Activated T-helper 1 cell treated with anti-CD3 and anti-CD28 coated beads, Interleukin-12 subunit alpha, Interleukin-12 subunit beta, Interleukin-2, Interleukin-4 antibody, amounts not matched to agents 30 ng/mL and 10 ng/mL and 1 ng/mL, durations not matched to agents 14 hours and 24 hours and 36 hours (primary cell): ENCODE measurements at regions of chr16 and their contacts with region 1.

Region 1: DNA sequence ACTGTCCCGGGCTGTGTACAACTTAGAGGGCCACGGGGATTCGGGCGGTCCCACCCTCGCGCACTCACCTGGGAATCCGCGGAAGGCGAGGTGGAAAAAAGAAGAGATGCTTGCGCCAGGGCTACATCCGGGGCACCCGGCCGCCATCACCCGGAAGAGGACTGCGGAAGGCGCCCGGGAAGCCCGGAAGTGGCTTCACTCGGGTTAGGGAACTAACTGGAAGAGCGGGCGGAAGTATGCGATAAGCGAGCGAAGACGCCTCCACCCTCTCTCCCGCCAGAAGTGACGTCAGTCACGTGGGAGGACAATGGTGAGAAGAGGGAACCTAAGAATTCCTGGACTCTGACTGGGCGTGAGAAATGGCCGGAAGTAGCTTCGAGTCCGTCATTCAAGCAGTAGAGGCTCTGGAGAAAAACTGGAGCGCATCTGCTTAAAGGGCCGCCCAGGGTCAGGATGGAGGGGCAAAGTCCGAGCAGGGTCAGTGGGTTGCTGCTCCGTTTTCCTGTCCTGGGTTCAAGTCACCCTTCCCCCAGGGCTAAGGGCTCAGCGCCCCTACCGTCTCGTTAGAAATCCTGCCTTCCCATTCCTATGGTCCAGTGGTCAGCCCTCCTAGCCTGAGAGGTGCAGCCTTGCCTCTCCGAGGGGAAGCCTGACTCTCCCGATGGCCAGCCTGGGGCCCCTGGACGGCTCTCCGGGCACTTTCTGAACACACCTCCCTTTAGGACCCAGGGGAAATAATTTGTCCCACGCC is at the start of gene CD2BP2:
- DNase-seq: peak; percentile 87
- H3K4me3 Mint-ChIP-seq: peak within 1 kb of the TSS; percentile 91
- H3K27ac Mint-ChIP-seq: peak within 1 kb of the TSS; percentile 88
- H3K4me1 Mint-ChIP-seq: peaks cover 46% of the 10 kb centered on the region
- H3K27me3 Mint-ChIP-seq: no peaks in the 10 kb centered on the region
- total RNA-seq, gene CD2BP2: 100 and 104 TPM in 2 replicates

Region 2: DNA sequence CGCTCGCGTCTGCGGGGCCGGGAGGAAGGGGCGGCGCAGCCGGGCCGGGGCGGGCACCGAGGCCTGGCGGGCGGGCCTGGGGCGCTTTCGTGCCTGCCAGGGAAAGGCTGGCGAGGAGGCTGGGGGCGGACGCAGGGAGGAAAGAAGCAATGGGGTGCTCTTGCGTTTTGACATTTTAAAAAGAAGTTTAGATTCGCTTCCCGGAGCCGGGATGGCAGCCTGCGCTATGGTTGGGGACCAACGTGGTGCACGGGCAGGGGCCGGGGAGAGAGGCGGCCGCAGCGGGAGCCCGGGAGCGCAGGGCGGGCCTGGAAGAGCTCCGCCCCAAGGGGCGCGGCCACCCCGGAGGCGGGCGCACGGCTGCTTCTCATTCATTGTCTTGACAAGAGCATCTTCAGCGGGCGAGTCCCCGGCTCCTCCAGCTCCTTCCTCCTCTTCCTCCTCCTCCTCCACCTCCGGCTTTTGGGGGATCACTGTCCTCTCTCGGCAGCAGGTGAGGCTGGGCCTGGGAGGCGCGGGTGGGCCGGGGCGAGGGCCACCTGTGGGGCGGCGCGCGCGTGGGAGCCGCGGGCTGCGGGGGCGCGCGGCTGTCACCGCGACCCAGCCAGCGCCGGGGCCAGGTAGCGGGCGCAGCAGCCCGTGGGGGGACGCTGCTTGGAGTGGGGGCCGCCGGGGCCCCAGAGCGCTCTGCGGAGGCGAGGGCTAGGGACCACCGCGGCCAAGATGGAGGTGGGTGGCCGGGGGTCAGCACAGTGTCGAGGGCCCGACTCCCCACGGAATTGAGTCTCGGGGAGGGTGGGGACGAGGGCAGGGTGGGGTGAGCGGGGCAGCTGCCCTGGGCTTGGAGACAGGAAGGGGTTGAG is 171.9 kb before region 1 on chr16 and contains the start of gene CORO1A:
- intact Hi-C with region 1: no loop called
- DNase-seq: peak; percentile 82
- H3K4me3 Mint-ChIP-seq: peak within 1 kb of the TSS; percentile 100
- H3K27ac Mint-ChIP-seq: peak within 1 kb of the TSS; percentile 99
- H3K4me1 Mint-ChIP-seq: peaks cover 27% of the 10 kb centered on the region
- H3K27me3 Mint-ChIP-seq: no peaks in the 10 kb centered on the region
- total RNA-seq, gene CORO1A: 816 and 819 TPM in 2 replicates

Region 3: GRCh38 chr16:30370444-30371247 is 15.3 kb after region 1 on chr16 and contains the start of gene TBC1D10B:
- intact Hi-C with region 1: loop called (anchors 1 kb)
- DNase-seq: peak; percentile 99
- H3K4me3 Mint-ChIP-seq: peak within 1 kb of the TSS; percentile 94
- H3K27ac Mint-ChIP-seq: peak within 1 kb of the TSS; percentile 89
- H3K4me1 Mint-ChIP-seq: peaks cover 41% of the 10 kb centered on the region
- H3K27me3 Mint-ChIP-seq: no peaks in the 10 kb centered on the region
- total RNA-seq, gene TBC1D10B: 68.9 and 73.6 TPM in 2 replicates

Region 4: DNA sequence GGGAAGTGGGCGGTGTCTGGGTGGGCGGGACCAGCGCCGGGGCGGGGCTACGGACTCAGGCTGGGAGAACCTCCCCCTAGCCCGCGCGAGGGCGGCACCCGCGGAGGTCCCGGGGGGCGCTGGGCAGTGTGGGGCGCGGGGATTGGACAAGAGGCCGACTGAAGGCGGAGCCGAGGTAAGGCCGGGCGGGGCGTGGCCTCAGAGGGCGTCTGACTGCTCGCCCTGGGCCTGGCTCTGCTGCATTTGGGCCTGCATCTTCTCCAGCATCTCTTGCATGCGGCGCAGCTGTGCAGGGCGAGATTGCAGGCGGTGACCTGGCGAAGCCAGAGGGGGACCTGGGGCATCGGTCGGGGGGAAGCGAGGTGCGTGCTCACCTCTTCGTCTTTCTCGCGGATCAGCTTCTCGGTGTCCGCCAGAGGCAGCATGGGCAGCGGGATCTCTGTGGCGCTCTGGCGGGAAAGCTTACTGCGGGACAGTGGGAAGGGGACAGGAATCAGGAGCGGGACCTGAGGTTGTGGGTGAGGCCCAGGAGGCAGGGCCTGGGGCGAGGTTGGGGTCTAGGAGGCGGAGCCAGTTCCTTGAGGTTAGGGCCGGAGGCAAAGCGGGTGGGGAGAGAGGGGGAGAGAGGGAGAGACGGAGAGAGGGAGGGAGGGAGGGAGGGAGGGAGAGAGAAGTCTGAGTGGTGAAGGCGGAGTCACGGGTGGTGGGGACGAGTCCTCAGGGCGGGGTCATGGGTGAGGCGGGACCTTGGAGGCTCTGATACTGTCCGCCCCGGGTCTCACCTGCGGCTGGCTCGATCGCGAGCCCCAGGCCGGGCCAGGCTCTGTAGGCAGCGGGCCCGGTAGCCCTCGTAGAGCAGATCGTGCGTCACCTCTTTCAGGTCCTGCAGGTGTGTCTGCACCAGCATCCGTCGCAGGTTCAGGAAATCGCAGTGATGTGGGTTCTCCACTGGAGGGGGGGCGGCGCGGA is 23.2 kb after region 1 on chr16:
- intact Hi-C with region 1: loop called (anchors 1 kb)
- DNase-seq: peak; percentile 98
- H3K4me3 Mint-ChIP-seq: peak overlapping the region; percentile 97
- H3K27ac Mint-ChIP-seq: peak overlapping the region; percentile 100
- H3K4me1 Mint-ChIP-seq: peaks cover 55% of the 10 kb centered on the region
- H3K27me3 Mint-ChIP-seq: peaks cover 2% of the 10 kb centered on the region